ENCODE measurements at regions of chr6 and their contacts with region 1.

Region 1: GRCh38 chr6:42901536-42901957 is 14.3 kb upstream of the PTCRA start:
- DNase-seq: peak; percentile 72 to 87 (median 82)
- H3K4me3 ChIP-seq: no peak overlapping the region
- H3K4me3 Mint-ChIP-seq: peak overlapping the region in 1 of 2 donors; percentile 35
- H3K27ac ChIP-seq: no peak overlapping the region
- H3K27ac Mint-ChIP-seq: no peak overlapping the region
- H3K4me1 ChIP-seq: peaks cover 0 to 14% of the 10 kb centered on the region in 2 donors
- H3K4me1 Mint-ChIP-seq: peaks cover 21% of the 10 kb centered on the region
- H3K27me3 ChIP-seq: no peaks in the 10 kb centered on the region
- H3K27me3 Mint-ChIP-seq: peaks cover 0 to 1% (median 0%) of the 10 kb centered on the region in 3 donors
- CTCF ChIP-seq: peak; percentile 81

Region 2: GRCh38 chr6:42938987-42939809 is 37.7 kb after region 1 on chr6:
- intact Hi-C with region 1: loop called (anchors 5 kb)
- DNase-seq: no peak
- H3K4me3 ChIP-seq: no peak overlapping the region
- H3K4me3 Mint-ChIP-seq: no peak overlapping the region
- H3K27ac ChIP-seq: peak overlapping the region in 1 of 2 donors; percentile 41
- H3K27ac Mint-ChIP-seq: peak overlapping the region in 6 of 7 donors; percentile 2 to 82 (median 53)
- H3K4me1 ChIP-seq: peaks cover 14% of the 10 kb centered on the region in 2 donors
- H3K4me1 Mint-ChIP-seq: peaks cover 15% of the 10 kb centered on the region
- H3K27me3 ChIP-seq: no peaks in the 10 kb centered on the region
- H3K27me3 Mint-ChIP-seq: peaks cover 0 to 2% (median 1%) of the 10 kb centered on the region in 3 donors
- CTCF ChIP-seq: no peak

Region 3: DNA sequence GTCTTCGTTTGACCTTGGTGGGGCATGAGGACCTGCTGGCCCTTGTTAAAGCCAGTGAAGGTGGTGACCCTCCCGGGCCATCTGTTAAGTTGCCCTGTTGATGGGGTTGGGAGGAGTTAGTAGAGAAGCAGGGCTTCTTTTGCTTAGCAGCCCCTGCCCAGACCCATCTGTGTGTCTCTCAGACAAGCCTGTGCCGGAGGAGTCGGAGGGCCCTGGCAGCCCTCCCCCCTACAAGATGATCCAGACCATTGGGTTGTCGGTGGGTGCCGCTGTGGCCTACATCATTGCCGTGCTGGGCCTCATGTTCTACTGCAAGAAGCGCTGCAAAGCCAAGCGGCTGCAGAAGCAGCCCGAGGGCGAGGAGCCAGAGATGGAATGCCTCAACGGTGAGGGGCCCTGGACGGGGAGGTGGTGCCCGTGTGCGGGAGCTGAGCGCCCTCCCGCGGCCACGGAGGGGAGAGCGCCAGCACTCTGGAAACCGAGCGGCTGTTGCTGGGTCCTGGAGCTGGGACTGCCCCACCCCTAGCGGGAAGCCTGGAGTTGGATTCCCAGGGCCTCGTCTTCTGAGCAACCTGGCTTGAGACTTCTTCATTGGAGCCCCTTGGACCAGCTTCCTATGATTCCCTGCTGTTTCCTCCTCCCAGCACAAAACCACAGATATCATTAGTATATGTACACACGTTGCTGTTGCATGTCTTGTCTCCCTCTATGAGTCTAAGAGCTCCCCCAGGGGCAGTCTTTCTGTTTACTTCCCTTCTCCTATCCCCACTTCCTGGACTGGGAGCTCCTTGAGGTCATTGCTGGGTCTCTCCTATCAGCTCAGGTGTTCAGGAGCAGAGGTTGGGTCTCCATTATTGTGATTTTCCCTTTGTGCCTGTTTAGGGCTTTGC is 241.9 kb after region 1 on chr6:
- intact Hi-C with region 1: loop called (anchors 2 to 5 kb)
- DNase-seq: peak; percentile 48 to 60 (median 59)
- H3K4me3 ChIP-seq: peak overlapping the region in 1 of 3 experiments; percentile 36
- H3K4me3 Mint-ChIP-seq: peak overlapping the region in 1 of 2 donors; percentile 51
- H3K27ac ChIP-seq: no peak overlapping the region
- H3K27ac Mint-ChIP-seq: peak overlapping the region in 1 of 7 donors; percentile 66
- H3K4me1 ChIP-seq: peaks cover 7% of the 10 kb centered on the region in 2 donors
- H3K4me1 Mint-ChIP-seq: peaks cover 7% of the 10 kb centered on the region
- H3K27me3 ChIP-seq: no peaks in the 10 kb centered on the region
- H3K27me3 Mint-ChIP-seq: peaks cover 0 to 6% (median 0%) of the 10 kb centered on the region in 3 donors
- CTCF ChIP-seq: peak; percentile 86

Measured in CD14-positive monocyte (primary cell).